Naive thymus-derived CD8-positive, alpha-beta T cell (primary cell): ENCODE measurements at regions of chr7 and their contacts with region 1.

Region 1: DNA sequence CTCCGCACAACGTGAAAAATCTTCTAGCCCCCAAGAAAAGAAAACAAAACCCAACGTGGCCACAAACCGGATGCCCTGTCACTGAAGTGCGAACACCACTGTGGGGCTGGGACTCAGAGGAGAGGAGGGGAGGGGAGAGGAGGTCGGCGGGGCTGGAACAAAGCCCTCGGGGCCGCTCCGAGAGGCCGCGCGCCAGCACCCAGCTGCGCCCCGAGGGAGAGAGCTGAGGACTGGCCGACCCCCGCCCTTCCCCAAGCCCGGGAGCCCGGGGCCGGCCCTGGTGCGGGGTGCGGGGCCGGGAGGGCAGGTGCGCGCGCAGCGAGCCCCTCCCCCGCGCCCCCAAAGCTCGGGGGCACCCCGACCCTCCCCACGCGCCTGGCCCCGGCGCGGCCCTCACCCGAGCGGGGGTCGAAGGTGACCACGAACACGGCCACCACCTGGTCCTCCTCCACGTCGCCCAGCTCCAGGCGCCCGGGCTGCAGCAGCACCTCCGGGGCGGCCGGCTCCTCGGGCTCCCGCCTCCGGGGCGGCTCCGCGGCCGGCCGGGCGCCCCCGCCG is 398 bp downstream of the DENND11 start:
- DNase-seq: peak; percentile 59 to 88 (median 81)
- ATAC-seq: peak; percentile 86 to 89
- H3K4me3 Mint-ChIP-seq: peak overlapping the region; percentile 83 to 95 (median 89)
- H3K27ac Mint-ChIP-seq: peak overlapping the region; percentile 87 to 97 (median 94)
- H3K4me1 Mint-ChIP-seq: peaks cover 40 to 53% (median 50%) of the 10 kb centered on the region in 4 donors
- H3K27me3 Mint-ChIP-seq: peaks cover 0 to 3% (median 0%) of the 10 kb centered on the region in 5 donors

Region 2: DNA sequence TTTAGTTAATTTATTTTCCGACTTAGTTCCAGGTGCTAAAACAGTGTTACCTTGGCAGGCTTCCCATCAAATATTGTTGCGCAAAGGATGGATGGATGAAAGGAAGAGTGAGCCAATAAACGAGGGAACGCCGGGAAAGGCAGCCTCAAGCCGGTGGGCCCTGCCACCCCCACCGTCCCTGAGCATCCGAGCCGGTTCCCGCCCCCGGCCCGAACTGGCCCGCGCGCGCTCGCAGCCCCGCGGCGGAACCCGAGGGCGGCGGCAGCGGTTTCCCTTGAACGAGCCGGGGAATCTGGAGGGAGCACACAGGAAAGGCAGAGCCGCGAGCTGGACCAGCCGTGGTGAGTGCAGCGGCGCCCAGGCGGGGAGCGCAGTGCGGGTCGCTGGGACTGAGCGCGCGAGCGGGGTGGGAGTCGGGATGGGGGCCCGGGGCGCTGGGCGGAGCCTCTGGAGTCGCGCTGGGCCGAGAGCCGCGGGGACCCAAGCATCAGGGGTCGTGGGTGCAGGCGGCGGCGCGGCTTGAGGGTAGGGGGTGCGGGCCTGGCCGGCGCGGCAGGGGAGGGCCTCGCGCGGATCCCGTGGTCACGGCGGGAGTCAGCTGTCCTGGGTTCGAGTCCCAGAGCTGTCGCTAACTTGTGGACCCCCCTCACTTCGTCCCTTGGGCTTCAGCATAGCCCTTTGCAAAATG is 150.3 kb before region 1 on chr7 and contains the start of gene AGK:
- POLR2A ChIA-PET with region 1: interaction called, 15 read pairs
- DNase-seq: peak; percentile 49 to 79 (median 69)
- ATAC-seq: peak; percentile 97 to 98
- H3K4me3 Mint-ChIP-seq: peak within 1 kb of the TSS; percentile 79 to 96 (median 94)
- H3K27ac Mint-ChIP-seq: peak within 1 kb of the TSS; percentile 81 to 94 (median 91)
- H3K4me1 Mint-ChIP-seq: peaks cover 25 to 36% (median 33%) of the 10 kb centered on the region in 4 donors
- H3K27me3 Mint-ChIP-seq: no peaks in the 10 kb centered on the region
- polyA plus RNA-seq, gene AGK: 23.3 to 29.3 (median 25.6) TPM

Region 3: GRCh38 chr7:141654551-141654950 is 47.0 kb before region 1 on chr7:
- POLR2A ChIA-PET with region 1: interaction called, 10 read pairs
- DNase-seq: peak; percentile 22 to 83 (median 62)
- ATAC-seq: peak; percentile 97
- H3K4me3 Mint-ChIP-seq: no peak overlapping the region
- H3K27ac Mint-ChIP-seq: peak overlapping the region in 9 of 10 donors; percentile 44 to 83 (median 71)
- H3K4me1 Mint-ChIP-seq: peaks cover 4 to 8% (median 6%) of the 10 kb centered on the region in 4 donors
- H3K27me3 Mint-ChIP-seq: no peaks in the 10 kb centered on the region

Region 4: GRCh38 chr7:141975806-141976523 is 274.4 kb after region 1 on chr7:
- POLR2A ChIA-PET with region 1: no interaction called
- DNase-seq: peak; percentile 28 to 79 (median 52)
- ATAC-seq: peak; percentile 87 to 90
- H3K4me3 Mint-ChIP-seq: peak overlapping the region; percentile 69 to 88 (median 81)
- H3K27ac Mint-ChIP-seq: peak overlapping the region; percentile 27 to 92 (median 80)
- H3K4me1 Mint-ChIP-seq: peaks cover 13 to 30% (median 22%) of the 10 kb centered on the region in 4 donors
- H3K27me3 Mint-ChIP-seq: no peaks in the 10 kb centered on the region